Posterior cingulate gyrus (tissue), 11 donors: ENCODE measurements at regions of chr1 and their contacts with region 1.

Region 1: DNA sequence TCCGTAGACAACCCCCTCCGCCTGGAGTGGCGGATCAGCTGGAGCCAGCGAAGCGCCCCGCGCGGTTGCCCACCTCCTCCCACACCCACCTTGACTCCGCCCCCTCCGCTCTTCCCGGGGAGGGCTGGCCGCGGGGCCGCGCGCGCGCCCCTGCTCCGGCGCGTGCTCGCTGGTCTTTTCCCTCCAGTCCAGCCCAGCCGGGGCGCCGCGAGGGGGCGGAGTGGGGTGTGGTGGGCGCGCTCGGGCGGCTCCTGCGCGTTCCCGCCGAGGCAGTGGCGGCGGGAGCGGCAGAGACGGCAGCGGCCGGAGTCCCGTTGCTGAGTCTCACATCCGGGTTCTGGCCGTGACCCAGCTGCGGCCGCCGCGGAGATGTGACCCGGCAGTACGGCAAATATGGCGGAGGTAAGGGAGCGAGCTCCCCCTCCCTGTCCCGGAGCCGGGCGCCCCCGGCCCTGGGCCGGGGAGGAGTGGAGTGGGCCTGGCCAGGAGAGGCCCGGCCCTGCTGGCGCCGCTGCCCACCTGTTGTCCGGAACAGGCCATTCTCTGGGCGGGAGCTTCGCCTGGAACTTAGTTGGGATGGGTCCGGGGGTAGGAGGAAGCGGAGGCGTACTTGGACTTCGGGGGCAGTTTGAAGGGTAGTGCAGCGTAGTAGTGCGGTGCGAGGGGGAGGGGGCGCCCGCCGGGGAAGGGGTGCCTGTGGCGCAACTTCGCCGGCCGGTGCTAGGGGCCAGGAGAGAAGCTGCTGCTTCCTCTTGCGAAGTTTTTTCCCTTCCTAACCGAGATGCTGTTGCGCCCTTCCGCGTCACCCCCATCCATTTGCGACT is 5.4 kb downstream of the MIER1 start:
- DNase-seq: peak; percentile 87 to 99 (median 94)

Region 2: DNA sequence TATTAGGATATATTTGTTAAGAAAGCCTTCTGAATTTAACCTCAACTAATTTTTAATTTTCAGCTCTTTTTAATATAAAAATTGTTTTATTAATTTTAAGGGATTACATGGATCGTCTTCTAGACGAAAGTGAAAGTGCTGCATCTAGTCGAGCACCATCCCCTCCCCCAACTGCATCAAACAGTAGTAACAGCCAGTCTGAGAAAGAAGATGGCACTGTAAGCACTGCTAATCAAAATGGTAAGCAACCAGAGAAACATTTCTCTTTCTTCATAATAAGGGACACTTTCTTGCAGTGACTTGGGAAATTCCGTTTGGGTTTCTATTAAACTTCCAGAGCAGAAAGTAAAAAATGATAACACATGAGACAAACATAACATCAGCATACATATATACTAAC is 51.5 kb after region 1 on chr1:
- intact Hi-C with region 1: loop called (anchors 10 kb)
- DNase-seq: peak in 7 of 10 donors; percentile 22 to 84 (median 48)

Region 3: DNA sequence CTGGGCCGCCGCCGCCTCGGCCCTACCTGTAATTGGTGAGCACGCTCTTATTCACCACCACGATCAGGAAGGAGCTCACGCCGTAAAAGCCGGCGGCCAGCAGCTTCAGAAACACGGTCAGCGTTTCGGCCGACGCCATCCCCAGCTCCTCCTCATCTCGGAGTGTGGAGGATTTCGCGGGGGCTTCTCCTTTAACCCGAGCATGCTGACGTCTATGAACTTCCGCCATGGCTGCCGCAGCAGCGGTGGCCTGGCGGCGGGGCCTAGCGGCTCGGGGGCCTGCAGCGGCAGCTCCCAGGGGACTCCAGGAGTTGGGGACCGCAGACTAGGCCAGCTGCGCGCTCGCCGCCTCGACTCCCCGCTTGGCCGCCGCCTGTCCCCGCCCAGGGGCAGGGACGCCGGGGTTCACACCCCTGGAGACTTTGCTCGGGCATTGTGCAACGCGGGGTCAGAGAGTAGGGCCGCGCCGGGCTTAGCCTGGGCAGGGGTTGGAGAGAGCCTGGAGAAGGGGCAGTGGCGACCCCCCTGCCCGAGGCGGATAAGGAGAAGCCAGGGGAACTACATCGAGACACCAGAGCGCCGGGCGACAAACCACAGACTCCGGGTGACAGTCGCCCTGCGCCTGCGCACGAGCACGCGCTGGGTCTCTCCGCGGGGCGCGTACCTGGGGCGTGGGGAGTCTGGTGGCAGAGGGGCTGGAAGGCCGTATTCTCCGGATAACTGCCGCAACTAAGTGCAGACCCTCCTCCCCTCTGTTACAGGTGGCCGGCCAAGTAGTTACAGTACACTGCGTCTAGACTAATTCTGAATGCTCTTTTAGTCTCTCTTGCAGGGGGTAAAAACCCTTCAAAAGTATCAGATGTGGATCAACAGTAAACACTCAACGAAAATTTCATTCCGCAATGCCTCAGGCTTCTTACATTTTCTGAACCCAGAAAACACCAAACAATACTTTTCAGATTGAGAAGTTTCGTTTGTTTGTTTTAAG is 123.9 kb after region 1 on chr1 and contains the start of gene SLC35D1:
- intact Hi-C with region 1: loop called (anchors 5 kb)
- DNase-seq: peak; percentile 74 to 98 (median 82)